ENCODE measurements at regions of chr10 and their contacts with region 1.

Region 1: DNA sequence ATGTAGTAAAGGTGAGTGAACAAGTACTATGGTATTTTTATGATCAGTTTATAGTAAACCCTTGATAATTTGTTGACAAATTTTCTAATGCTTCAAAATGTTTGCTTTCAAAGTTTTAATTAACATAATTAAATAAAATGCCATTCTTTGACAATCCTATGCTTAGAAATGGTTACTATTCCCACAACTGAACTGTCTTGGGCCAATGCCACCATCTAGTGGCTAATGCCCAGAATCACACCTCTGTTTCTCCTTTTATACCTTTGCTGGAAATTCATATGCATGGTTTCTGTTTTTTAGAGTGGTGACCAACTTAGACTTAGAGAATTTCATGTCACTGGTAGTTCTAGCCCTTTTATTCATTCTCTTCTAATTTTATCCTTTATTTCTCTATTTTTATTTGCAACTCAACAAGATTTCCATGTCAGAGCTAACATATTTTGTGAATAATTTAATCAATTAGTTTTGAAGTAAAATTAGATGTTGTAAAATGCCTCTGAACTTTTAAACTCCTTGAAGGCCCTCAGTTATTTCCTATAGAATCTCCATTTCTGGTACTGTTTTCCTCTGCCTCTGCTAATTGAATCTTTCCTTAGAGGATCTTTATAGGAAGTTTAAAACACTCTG is 31.1 kb downstream of the PCGF5 start:
- DNase-seq: peak; percentile 37
- ATAC-seq: peak in 1 of 2 donors; percentile 63

Region 2: GRCh38 chr10:90579602-90580242 is 671.8 kb before region 1 on chr10:
- intact Hi-C with region 1: no loop called
- DNase-seq: no peak
- ATAC-seq: no peak

Region 3: DNA sequence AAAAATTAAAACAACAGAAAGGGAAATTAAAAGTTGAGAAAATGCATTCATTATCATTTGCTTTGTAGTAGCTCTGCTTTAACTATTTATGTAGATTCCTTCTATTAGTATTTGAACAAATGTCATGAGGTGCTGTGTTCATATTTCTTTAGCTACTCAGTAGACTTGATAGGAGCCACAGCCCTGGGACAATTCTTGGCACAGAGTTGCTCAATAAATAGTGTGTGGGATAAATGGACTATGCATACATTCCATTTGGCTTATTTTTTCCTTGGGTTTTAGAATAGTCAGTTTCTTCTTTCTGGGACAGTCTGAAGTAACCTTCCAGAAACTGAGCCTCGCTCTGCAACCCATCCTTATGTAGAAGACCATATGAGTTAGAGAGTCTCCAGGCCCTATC is 366.4 kb before region 1 on chr10:
- intact Hi-C with region 1: loop called in 1 of 2 experiments (anchors 10 kb)
- DNase-seq: no peak
- ATAC-seq: no peak

Region 4: DNA sequence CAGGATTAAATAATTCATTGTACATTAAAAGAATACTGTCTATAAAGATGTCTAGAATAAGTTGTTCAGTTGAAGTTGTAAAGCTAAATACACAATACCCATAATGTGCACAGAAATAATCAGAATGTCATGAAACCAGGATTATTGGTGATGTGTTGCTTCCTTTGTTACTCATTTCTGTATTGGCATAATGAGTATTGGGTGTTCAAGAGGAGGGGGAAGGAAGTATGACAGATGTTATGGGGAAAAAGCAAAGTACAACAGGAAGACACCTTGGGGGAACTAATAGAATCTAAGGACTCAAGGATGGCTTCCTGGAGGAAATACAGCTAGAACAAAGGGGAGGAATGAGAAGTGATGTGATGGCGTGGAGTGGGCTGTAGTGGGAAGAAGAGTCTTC is 345.6 kb before region 1 on chr10:
- intact Hi-C with region 1: loop called (anchors 5 to 10 kb)
- DNase-seq: no peak
- ATAC-seq: no peak

Region 5: DNA sequence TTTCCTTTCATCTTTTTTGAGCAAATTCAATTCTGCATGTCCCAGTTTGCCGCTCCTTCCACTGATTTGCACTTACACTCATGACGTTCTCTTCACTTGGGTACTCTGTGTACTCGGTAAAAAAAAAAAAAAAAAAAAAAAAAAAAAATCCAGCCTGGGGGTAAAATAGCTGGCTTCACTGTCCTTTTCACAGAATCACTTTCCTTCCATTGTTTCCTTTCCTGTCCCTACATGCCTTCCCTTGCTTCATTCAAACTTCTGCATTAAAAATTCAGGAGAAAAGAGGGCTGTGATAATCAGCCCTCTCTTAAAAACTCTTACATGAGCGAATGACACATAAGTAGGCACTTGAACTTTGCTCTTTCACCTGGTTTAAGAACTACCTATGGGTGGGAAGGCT is 339.4 kb before region 1 on chr10:
- intact Hi-C with region 1: loop called (anchors 5 to 10 kb)
- DNase-seq: no peak
- ATAC-seq: peak in 1 of 2 donors; percentile 2

Region 6: DNA sequence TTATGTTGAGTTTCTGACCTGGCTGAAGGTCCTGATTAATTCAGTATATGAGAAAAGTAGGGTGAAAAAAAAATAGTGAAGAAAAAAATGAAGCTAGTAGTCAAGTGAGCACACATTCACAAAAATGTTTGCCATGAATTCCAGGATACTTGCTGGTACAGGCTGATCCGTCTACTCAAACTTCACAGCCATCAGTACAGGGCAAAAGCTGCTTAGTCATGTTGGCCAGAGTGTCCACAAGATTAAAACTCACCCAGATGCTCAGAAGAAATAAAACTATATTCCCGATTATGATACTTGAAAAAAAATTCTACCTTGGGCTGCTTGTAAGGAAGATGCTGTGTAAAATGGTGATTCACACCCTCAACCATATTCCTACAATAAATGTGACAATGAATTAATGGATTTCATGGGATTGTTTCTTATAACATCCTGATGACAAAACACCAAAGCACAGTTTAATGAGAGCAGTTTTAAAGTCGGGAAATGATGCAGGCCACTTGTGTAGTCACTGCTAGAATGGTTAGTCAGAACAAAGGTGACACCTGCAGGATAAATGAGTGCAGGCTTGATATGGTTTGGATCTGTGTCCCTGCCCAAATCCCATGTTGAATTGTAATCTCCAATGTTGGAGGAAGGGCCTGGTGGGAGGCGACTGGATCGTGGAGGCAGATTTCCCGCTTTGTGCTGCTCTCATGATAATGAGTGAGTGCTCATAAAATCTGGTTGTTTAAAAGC is 281.4 kb before region 1 on chr10:
- intact Hi-C with region 1: no loop called
- DNase-seq: no peak
- ATAC-seq: peak in 1 of 2 donors; percentile 14

Region 7: DNA sequence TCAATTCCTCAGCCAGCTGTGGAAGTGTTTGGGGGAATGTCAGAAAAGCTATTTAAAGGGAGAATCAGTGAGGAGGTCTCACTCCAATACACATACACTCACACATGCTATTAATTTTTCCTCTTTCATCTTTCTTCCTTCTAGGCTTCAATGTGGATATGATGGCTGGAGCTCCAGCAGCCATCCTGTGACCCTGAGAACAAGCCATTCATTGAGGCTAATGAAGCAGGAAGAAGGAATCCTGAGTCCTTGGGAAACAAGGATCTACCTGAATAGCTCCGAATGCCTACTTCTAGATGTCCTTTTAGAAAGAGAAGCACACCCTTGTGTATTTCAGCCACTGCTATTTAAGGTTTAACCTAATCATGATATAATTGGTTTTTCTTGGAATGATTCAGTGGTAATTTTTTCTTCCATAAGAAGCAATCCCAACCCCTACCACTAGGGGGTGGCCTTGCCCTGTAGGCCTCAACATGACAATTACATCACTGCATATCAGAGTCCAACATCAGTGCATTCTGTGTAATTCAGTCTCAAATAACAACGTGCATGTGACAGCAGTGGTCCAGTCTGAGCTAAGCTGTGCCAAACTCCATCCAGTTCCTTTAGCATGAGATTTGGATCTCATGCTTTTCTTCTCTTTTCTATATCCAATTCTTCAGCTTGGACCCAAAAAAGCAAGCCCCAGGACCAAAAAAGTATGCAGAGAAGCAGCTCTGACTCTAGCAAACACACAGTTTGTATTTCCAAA is 245.4 kb before region 1 on chr10:
- intact Hi-C with region 1: loop called (anchors 2 to 10 kb)
- DNase-seq: peak; percentile 44
- ATAC-seq: peak; percentile 75 to 80

Region 8: DNA sequence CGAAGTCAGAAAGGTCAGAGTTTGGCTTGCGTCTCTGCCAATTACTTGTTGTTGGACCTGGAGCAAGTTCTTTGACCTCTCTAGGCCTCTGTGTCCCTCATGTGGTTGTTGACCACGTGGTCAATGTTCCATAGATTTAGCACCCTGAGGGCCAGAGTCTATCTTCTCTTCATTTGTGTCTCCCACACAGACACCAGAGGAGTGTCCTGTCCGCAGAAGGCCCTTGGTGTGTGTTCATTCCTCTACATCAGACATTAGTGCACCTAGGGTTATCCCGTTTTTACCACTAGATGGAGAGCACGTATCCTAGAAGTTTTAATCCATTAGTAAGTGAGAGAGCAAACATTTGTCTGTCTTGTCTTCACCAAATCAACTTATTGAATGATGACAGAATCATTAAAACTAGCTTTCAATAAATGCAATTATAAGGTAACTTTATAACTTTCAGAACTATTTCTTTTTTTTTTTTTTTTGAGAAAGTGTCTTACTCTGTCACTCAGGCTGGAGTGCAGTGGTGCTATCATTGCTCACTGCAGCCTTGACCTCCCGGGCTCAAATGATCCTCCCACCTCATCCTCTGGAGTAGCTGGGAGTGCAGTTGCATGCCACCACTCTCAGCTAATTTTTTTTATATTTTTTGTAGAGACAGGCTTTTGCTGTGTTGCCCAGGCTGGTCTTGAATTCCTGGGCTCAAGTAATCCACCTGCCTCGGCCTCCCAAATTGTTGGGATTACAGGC is 208.2 kb before region 1 on chr10:
- intact Hi-C with region 1: loop called (anchors 5 to 10 kb)
- DNase-seq: no peak
- ATAC-seq: peak; percentile 79 to 81

Region 9: GRCh38 chr10:91163269-91163868 is 88.2 kb before region 1 on chr10:
- intact Hi-C with region 1: loop called in 1 of 2 experiments (anchors 5 kb)
- DNase-seq: peak; percentile 81
- ATAC-seq: peak; percentile 64 to 73

Region 10: GRCh38 chr10:91745074-91745832 is 493.7 kb after region 1 on chr10:
- intact Hi-C with region 1: no loop called
- DNase-seq: no peak
- ATAC-seq: peak; percentile 41 to 66

Region 11: DNA sequence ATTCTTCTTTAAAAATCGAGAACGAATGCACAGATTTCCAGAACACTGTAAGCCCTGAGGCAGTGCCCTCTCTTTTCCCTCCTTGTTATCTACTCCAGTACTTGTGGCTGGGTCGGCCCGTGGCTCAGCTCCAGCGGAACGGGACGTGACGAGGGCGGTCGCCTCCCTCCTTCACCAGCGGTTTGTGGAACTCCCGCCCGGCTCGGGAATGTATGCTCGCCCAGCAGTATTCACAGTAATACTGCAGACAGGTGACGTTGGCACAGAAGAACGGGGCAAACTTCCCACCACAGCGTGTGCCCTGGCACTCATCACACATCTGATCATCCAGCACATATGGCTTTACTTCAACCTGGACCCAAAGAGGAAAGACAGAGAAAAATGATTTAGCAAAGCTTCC is 800.5 kb after region 1 on chr10:
- intact Hi-C with region 1: no loop called
- DNase-seq: peak; percentile 62
- ATAC-seq: peak; percentile 82 to 84